ENCODE measurements at regions of chr17 and their contacts with region 1.

Region 1: GRCh38 chr17:21511363-21512198 is 135.4 kb downstream of the KCNJ12 start:
- DNase-seq: peak; percentile 66
- H3K4me3 ChIP-seq: peak overlapping the region; percentile 45 to 47 (median 46)
- H3K27ac ChIP-seq: no peak overlapping the region
- H3K4me1 ChIP-seq: peaks cover 13% of the 10 kb centered on the region
- H3K27me3 ChIP-seq: peaks cover 5% of the 10 kb centered on the region
- CTCF ChIP-seq: peak; percentile 28 to 79

Region 2: GRCh38 chr17:21119247-21119918 is 392.2 kb before region 1 on chr17:
- CTCF ChIA-PET with region 1: interaction called, 3 read pairs
- dilution Hi-C with region 1: no loop called
- in situ Hi-C with region 1: loop called in 1 of 2 experiments (anchors 10 kb)
- intact Hi-C with region 1: loop called (anchors 2 kb)
- DNase-seq: peak; percentile 59
- H3K4me3 ChIP-seq: no peak overlapping the region
- H3K27ac ChIP-seq: no peak overlapping the region
- H3K4me1 ChIP-seq: no peaks in the 10 kb centered on the region
- H3K27me3 ChIP-seq: no peaks in the 10 kb centered on the region
- CTCF ChIP-seq: peak; percentile 94 to 98

Region 3: GRCh38 chr17:21126645-21127510 is 384.7 kb before region 1 on chr17 and contains the start of gene DHRS7B:
- CTCF ChIA-PET with region 1: no interaction called
- dilution Hi-C with region 1: no loop called
- in situ Hi-C with region 1: loop called (anchors 10 to 25 kb)
- intact Hi-C with region 1: loop called (anchors 1 kb)
- DNase-seq: peak; percentile 95
- H3K4me3 ChIP-seq: peak within 1 kb of the TSS; percentile 63 to 97 (median 71)
- H3K27ac ChIP-seq: peak within 1 kb of the TSS; percentile 71
- H3K4me1 ChIP-seq: peaks cover 12% of the 10 kb centered on the region
- H3K27me3 ChIP-seq: no peaks in the 10 kb centered on the region
- CTCF ChIP-seq: peak in 1 of 2 donors; percentile 14
- total RNA-seq, gene DHRS7B: 27.3 to 29.5 TPM

Region 4: DNA sequence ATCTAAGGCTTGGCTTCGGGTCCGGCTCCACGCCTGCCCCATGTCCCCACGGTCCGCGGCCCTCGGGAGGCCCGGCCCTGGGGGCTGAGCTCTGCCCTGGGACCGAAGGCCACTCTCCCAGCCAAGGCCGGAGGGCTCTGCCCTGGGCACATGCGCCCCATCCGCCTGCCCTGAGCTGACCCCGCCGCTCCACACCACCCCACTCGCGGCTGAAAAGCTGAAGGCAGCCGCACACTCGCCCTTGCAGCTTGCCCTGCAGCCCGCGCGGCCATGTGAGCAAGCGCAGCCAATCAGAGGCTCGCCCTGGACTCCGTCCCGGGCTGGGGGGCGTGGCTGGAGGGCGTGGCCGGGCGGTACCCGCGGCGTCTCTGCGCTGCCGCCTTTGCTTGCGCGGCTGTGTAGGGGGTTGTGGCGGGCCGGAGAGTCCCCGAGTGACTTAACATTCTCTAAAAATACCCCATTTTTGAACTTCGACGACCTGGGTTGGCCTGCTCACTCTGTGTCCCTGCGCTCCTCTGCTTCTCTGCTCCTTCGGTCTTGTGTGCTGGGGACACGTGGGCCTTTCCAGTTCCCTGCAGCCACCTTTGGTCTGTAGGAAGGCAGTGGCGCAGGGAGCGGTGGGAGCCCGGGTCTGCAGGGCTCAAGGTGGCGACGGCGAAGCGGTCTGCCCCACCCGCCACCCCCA is 235.9 kb before region 1 on chr17:
- CTCF ChIA-PET with region 1: no interaction called
- dilution Hi-C with region 1: no loop called
- in situ Hi-C with region 1: no loop called
- intact Hi-C with region 1: loop called (anchors 1 kb)
- DNase-seq: peak; percentile 70
- H3K4me3 ChIP-seq: peak overlapping the region; percentile 58 to 66 (median 62)
- H3K27ac ChIP-seq: no peak overlapping the region
- H3K4me1 ChIP-seq: peaks cover 15% of the 10 kb centered on the region
- H3K27me3 ChIP-seq: no peaks in the 10 kb centered on the region
- CTCF ChIP-seq: no peak

Region 5: DNA sequence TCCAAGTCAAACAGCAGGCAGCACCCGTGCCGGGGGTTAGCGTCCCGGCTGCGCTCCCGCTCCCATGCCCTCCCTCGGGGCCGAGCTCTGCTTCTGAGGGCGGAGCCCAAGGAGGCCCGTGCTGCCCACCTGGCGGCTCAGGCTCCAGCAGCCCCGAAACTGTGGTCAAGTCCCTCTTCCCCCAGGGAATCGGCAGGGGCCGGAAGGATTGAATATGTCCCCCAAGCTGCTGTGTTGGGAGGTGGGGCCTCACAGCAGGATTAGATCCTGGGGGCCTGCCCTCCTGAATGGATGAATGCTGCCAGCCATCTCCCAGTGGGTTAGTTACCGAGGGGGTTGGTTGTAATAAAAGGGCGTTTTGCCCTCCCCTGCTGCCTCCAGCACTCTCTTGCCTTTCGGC is 193.1 kb before region 1 on chr17:
- CTCF ChIA-PET with region 1: no interaction called
- dilution Hi-C with region 1: no loop called
- in situ Hi-C with region 1: no loop called
- intact Hi-C with region 1: loop called (anchors 2 kb)
- DNase-seq: no peak
- H3K4me3 ChIP-seq: no peak overlapping the region
- H3K27ac ChIP-seq: no peak overlapping the region
- H3K4me1 ChIP-seq: no peaks in the 10 kb centered on the region
- H3K27me3 ChIP-seq: no peaks in the 10 kb centered on the region
- CTCF ChIP-seq: no peak

Region 6: GRCh38 chr17:21464611-21465021 is 47.0 kb before region 1 on chr17:
- CTCF ChIA-PET with region 1: no interaction called
- dilution Hi-C with region 1: no loop called
- in situ Hi-C with region 1: loop called (anchors 5 to 10 kb)
- intact Hi-C with region 1: no loop called
- DNase-seq: no peak
- H3K4me3 ChIP-seq: no peak overlapping the region
- H3K27ac ChIP-seq: no peak overlapping the region
- H3K4me1 ChIP-seq: no peaks in the 10 kb centered on the region
- H3K27me3 ChIP-seq: peaks cover 5% of the 10 kb centered on the region
- CTCF ChIP-seq: no peak

Region 7: DNA sequence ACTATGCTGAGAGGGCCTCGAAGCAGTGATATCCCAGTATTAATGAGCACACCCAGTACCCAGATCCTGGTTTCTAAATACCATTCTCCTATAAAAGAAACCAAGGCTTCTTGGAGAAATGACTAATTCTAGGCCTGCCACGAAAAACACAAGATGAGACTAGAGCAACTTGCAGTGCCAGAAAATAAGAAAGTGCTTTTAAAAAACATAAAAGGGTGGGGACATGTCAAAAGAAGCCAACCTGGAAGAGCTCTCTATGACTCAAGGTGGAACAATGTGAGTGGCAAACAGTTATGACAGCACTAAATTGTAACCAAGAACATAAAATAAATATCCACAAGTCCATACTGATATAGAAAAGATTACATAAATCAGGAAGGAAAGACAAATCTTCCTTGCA is 27.6 kb after region 1 on chr17:
- CTCF ChIA-PET with region 1: no interaction called
- dilution Hi-C with region 1: no loop called
- in situ Hi-C with region 1: no loop called
- intact Hi-C with region 1: no loop called
- DNase-seq: peak; percentile 62
- H3K4me3 ChIP-seq: no peak overlapping the region
- H3K27ac ChIP-seq: no peak overlapping the region
- H3K4me1 ChIP-seq: no peaks in the 10 kb centered on the region
- H3K27me3 ChIP-seq: no peaks in the 10 kb centered on the region
- CTCF ChIP-seq: no peak